ENCODE measurements at regions of chr22 and their contacts with region 1.

Region 1: GRCh38 chr22:28882878-28883656 is at the start of gene ZNRF3:
- DNase-seq: peak; percentile 91
- H3K4me3 Mint-ChIP-seq: peak within 1 kb of the TSS; percentile 84
- H3K27ac Mint-ChIP-seq: peak within 1 kb of the TSS; percentile 41
- H3K4me1 Mint-ChIP-seq: peaks cover 24% of the 10 kb centered on the region
- H3K27me3 Mint-ChIP-seq: no peaks in the 10 kb centered on the region
- CTCF ChIP-seq: no peak
- total RNA-seq, gene ZNRF3: 23.7 and 24.5 TPM in 2 replicates

Region 2: DNA sequence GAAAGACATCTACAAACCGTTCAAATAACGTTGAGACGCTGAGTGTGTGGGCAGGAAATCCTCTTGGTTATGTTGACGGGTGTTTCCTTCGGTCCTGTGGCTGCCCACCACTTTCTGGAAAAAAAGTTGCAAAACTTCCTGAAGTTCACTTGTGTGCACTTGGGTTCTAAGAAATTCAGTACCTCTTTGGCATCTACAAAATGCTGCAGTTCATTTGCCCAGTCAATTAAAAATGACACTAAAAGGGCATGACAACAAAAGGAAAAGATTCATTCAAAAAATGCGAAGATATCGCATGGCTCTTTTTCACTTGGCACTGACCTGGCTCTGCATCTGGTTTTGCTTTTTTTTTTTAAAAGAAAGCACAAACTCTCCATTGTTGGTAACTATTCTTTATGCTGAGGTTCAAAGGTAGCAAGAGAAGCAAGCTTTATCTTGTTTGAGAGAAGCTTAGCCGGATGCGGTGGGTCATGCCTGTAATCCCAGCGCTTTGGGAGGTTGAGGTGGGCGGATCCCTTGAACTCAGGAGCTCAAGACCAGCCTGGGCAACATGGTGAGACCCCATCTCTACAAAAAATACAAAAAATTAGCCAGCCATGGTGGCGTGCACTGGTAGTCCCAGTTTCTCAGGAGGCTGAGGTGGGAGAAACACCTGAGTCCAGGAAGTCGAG is 72.1 kb before region 1 on chr22:
- CTCF ChIA-PET with region 1: no interaction called
- intact Hi-C with region 1: no loop called
- DNase-seq: no peak
- H3K4me3 Mint-ChIP-seq: no peak overlapping the region
- H3K27ac Mint-ChIP-seq: no peak overlapping the region
- H3K4me1 Mint-ChIP-seq: peaks cover 16% of the 10 kb centered on the region
- H3K27me3 Mint-ChIP-seq: no peaks in the 10 kb centered on the region
- CTCF ChIP-seq: no peak

Region 3: GRCh38 chr22:28976588-28976987 is 93.5 kb after region 1 on chr22:
- CTCF ChIA-PET with region 1: interaction called, 5 read pairs
- intact Hi-C with region 1: loop called (anchors 2 kb)
- DNase-seq: no peak
- H3K4me3 Mint-ChIP-seq: peak overlapping the region; percentile 9
- H3K27ac Mint-ChIP-seq: peak overlapping the region; percentile 61
- H3K4me1 Mint-ChIP-seq: peaks cover 45% of the 10 kb centered on the region
- H3K27me3 Mint-ChIP-seq: no peaks in the 10 kb centered on the region
- CTCF ChIP-seq: no peak

Region 4: DNA sequence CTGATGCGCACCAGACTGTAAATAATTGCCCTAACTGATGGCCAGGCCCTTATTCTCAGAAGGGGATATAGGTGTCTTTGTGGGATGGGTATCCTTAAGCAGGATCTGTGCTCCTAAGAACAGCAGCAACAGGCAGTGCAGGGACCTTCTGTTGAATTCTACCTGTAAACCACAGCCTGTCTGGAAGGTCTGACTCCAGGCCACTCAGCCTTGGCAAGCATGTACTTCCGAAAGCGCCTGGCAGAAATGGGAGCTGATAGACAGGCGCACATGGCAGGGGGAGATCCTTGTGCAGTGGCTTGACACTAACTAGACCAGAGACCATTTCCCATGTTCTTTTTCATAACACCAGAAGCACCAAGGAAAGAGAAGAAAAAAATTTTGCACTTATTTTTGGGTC is 119.5 kb after region 1 on chr22:
- CTCF ChIA-PET with region 1: no interaction called
- intact Hi-C with region 1: no loop called
- DNase-seq: no peak
- H3K4me3 Mint-ChIP-seq: no peak overlapping the region
- H3K27ac Mint-ChIP-seq: peak overlapping the region; percentile 18
- H3K4me1 Mint-ChIP-seq: peaks cover 28% of the 10 kb centered on the region
- H3K27me3 Mint-ChIP-seq: no peaks in the 10 kb centered on the region
- CTCF ChIP-seq: no peak

Region 5: DNA sequence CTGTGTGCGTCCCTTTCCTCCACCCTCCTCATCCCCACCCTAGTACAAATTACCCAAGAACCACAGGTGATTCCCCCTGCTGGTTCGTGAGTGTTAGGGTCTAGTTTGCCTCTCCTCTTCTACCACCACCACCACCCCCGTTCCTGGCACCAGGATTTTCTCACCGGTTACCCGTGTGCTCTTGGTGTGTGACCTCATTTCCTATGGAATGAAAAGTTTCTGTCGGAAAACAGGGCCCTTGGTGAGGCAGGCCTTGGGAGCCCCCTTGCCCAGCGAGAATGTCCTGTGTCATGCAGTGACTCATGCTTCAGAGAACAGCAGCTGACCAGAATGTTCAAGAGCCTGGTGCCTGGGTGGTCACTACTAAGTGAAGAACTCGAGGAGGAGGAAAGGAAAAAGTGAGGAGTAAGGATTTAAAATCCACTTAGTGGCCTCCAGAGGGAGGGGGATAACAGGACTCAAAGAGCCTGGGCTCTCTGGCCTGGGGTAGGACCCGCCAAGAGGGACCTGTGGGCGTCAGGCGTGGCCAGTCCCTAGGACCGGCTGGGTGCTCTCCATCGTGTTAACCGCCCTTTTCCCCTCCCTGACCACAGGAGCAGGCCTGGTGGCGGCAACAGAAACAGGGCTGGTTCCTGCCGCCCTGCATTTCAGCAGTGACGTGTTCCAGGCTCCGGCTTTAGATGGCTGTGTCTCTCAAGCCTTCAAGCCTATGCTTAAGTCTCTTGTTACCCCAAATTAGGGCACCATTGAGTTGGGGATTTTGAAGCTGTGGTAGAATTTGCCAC is 148.4 kb after region 1 on chr22:
- CTCF ChIA-PET with region 1: interaction called, 22 read pairs
- intact Hi-C with region 1: loop called (anchors 2 kb)
- DNase-seq: peak; percentile 84
- H3K4me3 Mint-ChIP-seq: peak overlapping the region; percentile 92
- H3K27ac Mint-ChIP-seq: peak overlapping the region; percentile 99
- H3K4me1 Mint-ChIP-seq: peaks cover 60% of the 10 kb centered on the region
- H3K27me3 Mint-ChIP-seq: no peaks in the 10 kb centered on the region
- CTCF ChIP-seq: peak; percentile 18

Region 6: GRCh38 chr22:29040385-29041275 is 157.6 kb after region 1 on chr22:
- CTCF ChIA-PET with region 1: interaction called, 10 read pairs
- intact Hi-C with region 1: no loop called
- DNase-seq: peak; percentile 72
- H3K4me3 Mint-ChIP-seq: no peak overlapping the region
- H3K27ac Mint-ChIP-seq: no peak overlapping the region
- H3K4me1 Mint-ChIP-seq: peaks cover 43% of the 10 kb centered on the region
- H3K27me3 Mint-ChIP-seq: no peaks in the 10 kb centered on the region
- CTCF ChIP-seq: peak; percentile 82

Measured in Calu3 (cell line).